MCF 10A (cell line): ENCODE measurements at regions of chr10 and their contacts with region 1.

Region 1: DNA sequence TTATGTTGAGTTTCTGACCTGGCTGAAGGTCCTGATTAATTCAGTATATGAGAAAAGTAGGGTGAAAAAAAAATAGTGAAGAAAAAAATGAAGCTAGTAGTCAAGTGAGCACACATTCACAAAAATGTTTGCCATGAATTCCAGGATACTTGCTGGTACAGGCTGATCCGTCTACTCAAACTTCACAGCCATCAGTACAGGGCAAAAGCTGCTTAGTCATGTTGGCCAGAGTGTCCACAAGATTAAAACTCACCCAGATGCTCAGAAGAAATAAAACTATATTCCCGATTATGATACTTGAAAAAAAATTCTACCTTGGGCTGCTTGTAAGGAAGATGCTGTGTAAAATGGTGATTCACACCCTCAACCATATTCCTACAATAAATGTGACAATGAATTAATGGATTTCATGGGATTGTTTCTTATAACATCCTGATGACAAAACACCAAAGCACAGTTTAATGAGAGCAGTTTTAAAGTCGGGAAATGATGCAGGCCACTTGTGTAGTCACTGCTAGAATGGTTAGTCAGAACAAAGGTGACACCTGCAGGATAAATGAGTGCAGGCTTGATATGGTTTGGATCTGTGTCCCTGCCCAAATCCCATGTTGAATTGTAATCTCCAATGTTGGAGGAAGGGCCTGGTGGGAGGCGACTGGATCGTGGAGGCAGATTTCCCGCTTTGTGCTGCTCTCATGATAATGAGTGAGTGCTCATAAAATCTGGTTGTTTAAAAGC is 49.2 kb upstream of the ANKRD1 start:
- DNase-seq: peak; percentile 60
- H3K4me3 Mint-ChIP-seq: no peak overlapping the region
- H3K27ac Mint-ChIP-seq: peak overlapping the region; percentile 57
- H3K4me1 Mint-ChIP-seq: peaks cover 22% of the 10 kb centered on the region
- H3K27me3 Mint-ChIP-seq: no peaks in the 10 kb centered on the region
- CTCF ChIP-seq: no peak

Region 2: GRCh38 chr10:90920986-90921666 is 49.0 kb before region 1 on chr10 and contains the start of gene ANKRD1:
- CTCF ChIA-PET with region 1: interaction called, 4 read pairs
- POLR2A ChIA-PET with region 1: interaction called, 3 read pairs
- intact Hi-C with region 1: loop called (anchors 5 kb)
- DNase-seq: peak; percentile 82
- H3K4me3 Mint-ChIP-seq: peak within 1 kb of the TSS; percentile 16
- H3K27ac Mint-ChIP-seq: peak within 1 kb of the TSS; percentile 15
- H3K4me1 Mint-ChIP-seq: peaks cover 15% of the 10 kb centered on the region
- H3K27me3 Mint-ChIP-seq: no peaks in the 10 kb centered on the region
- CTCF ChIP-seq: no peak
- total RNA-seq, gene ANKRD1: 0.20 and 0.65 TPM in 2 replicates

Region 3: DNA sequence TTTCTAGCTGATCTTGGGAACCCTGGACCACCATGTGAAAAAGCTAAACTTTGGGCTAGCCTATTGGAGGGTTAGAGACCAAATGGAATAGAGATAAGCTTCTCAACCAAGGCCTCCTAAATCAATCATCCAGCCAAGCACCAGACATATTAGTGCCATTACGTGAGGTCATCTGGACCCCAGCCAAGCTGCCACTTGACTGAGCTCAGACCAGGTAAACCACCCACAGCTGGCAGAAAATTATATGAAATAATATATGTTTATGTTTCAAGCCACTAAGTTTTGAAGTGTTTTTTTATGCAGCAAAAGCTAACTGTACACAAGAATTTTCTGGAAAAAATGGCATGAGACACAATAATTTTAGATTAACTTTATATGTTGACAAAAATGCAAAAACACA is 167.7 kb after region 1 on chr10:
- CTCF ChIA-PET with region 1: no interaction called
- POLR2A ChIA-PET with region 1: no interaction called
- intact Hi-C with region 1: no loop called
- DNase-seq: no peak
- H3K4me3 Mint-ChIP-seq: no peak overlapping the region
- H3K27ac Mint-ChIP-seq: no peak overlapping the region
- H3K4me1 Mint-ChIP-seq: peaks cover 4% of the 10 kb centered on the region
- H3K27me3 Mint-ChIP-seq: peaks cover 11% of the 10 kb centered on the region
- CTCF ChIP-seq: no peak

Region 4: DNA sequence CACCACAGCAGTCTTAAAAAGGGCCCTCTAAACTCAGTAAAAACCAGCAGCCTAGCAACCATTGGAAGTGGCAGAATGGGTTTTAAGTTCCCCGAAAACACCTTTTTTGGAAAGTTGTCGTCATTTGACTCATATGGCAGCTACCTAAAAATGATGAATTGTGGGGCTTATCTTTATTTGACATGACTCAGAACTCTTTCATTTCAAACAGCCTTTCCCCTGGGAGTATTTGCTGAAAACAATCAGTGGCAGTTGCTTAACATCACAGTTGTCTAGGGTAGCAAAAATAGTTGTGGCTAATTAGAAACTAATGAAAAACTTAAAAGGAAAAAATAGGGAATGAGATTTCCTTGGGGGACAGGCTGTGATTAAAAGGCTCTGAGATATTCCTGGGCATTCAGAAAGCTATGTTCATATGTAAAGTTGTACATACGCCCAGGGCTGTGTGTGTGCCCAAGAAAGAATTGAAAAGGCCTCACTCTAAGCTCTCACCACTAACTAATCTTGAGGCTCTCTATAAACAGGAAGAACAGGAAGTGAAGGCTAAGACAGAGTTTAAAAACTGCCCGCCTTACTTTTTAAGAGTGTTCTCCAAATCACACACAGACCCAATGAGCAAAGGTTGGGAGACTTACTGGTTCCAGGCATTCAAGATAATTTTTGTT is 358.3 kb after region 1 on chr10:
- CTCF ChIA-PET with region 1: no interaction called
- POLR2A ChIA-PET with region 1: no interaction called
- intact Hi-C with region 1: no loop called
- DNase-seq: no peak
- H3K4me3 Mint-ChIP-seq: no peak overlapping the region
- H3K27ac Mint-ChIP-seq: no peak overlapping the region
- H3K4me1 Mint-ChIP-seq: no peaks in the 10 kb centered on the region
- H3K27me3 Mint-ChIP-seq: no peaks in the 10 kb centered on the region
- CTCF ChIP-seq: no peak